ENCODE measurements at regions of chr4 and their contacts with region 1.

Region 1: DNA sequence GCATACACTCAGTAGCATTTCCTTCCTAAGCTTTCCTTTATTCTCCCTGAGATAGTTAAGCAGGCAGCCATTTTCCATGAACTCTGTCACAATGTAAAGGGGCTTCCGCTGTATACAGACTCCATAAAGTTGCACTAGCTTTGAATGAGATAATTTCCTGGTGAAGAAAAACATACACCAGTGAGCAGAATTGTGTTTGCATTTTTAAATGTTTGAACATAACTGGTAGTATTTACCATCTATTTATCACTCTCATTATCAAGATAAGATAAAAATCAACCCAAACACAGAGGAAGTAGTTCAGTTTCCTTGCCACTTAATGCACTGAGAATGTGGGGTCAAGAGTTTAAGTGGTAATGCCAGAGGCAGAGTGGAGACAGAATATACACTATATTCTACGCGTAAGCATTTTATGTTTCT is 54.1 kb downstream of the TXK start:
- DNase-seq: no peak
- ATAC-seq: no peak

Region 2: DNA sequence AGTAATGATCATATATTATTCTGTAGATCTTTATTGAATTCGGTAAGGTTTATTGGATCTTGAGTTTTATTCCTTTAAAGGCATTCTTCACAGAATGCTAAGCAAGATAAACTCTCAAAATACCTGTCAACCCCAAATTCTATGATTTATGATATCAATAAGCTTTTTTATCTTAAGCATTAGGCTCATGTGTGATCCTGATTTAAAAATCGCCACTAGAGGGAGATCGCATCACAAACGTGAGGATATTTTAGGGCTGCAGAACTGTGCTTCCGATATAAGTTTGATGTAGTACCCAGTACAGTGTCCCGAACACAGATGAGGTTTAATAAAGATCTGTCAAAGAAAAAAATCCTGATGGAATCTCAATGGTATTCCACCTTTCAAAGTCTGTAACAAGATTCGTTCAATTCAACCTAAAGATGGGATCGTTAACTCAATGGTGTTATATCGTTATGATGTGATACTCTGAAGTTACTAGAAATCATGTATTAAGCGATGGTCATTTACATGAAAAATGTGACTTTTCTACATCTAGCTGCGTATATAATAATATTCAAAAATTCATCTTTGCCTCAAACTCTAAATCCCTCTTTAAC is 411.1 kb before region 1 on chr4:
- intact Hi-C with region 1: loop called (anchors 10 kb)
- DNase-seq: no peak
- ATAC-seq: no peak

Region 3: DNA sequence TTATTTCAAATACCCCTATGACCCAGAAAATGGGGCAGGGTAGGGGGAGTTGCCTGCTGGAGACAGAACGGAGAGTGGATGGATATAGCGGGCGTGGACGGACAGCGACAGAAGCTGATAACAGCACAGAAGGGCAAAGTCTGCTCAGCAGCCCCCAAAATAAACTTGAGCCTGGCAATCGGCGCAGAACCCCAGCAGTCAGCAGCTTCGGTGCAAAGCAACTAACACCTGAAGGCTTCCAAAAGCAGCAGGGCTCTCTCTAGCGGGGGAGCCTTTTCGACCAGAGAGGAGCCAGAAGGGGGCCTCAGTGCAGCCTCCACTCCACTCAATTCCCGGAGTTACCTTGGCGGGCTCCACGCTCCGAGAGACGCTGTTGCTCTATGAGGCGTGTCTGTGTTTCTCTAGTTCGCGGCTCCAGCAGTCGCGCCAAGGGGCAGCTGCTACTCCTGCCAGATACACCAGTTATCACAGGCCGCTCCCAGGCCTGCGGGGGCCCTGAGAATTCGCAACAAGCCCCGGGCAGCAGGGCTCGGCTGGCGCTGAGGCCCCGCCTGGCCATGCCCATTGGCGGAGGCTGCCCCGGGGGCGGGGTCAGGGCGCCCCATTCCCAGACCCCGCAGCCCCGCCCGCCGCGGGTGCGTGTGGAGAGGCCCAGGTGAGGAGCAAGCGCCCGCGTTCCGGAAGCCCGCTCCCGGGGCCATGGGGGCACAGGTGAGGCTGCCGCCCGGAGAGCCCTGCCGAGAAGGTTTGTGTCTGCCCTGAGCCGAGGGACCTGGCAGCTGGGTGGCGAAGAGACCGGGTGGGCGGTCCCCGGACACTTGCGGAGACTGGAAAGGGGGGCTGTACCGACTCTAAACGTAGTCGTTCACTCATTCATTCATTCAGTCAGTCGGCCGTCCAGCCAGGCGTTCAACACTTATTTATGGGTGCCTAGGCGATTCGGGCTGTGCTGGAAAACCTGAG is 63.6 kb before region 1 on chr4 and contains the starts of genes CNGA1 and NIPAL1:
- intact Hi-C with region 1: loop called (anchors 5 kb)
- DNase-seq: peak; percentile 82
- ATAC-seq: peak; percentile 97
- total RNA-seq, gene CNGA1: not detected
- total RNA-seq, gene NIPAL1: 0.70 TPM

Measured in Right ventricle myocardium inferior (tissue), 1 donor.